Activated CD4-positive, alpha-beta T cell treated with anti-CD3 and anti-CD28 coated beads for 36 hours (primary cell): ENCODE measurements at regions of chr5 and their contacts with region 1.

Region 1: GRCh38 chr5:159262859-159263567 is at the start of gene UBLCP1:
- DNase-seq: peak; percentile 85
- ATAC-seq: peak; percentile 92
- H3K4me3 Mint-ChIP-seq: peak within 1 kb of the TSS; percentile 89
- H3K27ac Mint-ChIP-seq: peak within 1 kb of the TSS; percentile 100
- H3K4me1 Mint-ChIP-seq: peaks cover 49% of the 10 kb centered on the region
- H3K27me3 Mint-ChIP-seq: no peaks in the 10 kb centered on the region
- total RNA-seq, gene UBLCP1: 26.0 to 31.0 TPM

Region 2: GRCh38 chr5:159163027-159163700 is 99.8 kb before region 1 on chr5:
- CTCF ChIA-PET with region 1: no interaction called
- POLR2A ChIA-PET with region 1: no interaction called
- intact Hi-C with region 1: loop called in 1 of 2 experiments (anchors 1 kb)
- DNase-seq: peak; percentile 38
- ATAC-seq: peak; percentile 96
- H3K4me3 Mint-ChIP-seq: no peak overlapping the region
- H3K27ac Mint-ChIP-seq: peak overlapping the region; percentile 82
- H3K4me1 Mint-ChIP-seq: peaks cover 48% of the 10 kb centered on the region
- H3K27me3 Mint-ChIP-seq: no peaks in the 10 kb centered on the region

Region 3: DNA sequence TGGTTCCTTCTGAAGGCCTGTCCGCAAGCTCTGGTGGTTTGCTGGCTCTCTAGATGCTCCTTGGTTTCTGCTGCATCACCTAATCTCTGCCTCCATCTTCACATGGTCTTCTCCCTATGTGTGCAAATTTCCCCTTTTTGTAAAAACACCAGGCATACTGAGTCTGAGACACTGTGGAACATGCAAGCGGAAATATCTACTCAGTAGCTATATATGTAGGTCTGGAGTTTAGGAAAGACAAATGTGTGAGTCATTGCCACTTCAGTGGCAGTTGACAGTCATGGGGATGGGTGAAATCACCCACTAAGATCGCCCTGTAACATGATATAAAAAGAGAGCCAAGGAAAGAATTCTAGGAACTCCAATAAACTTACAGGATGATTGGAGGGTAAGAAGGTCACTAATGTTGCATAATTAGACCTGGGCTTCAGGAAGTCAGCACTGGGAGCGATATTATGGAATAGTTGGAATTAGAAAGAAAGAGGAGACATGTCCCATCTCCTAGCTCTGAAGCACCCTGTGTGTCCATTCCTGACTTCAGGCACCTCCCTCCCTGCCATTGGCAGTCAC is 22.6 kb before region 1 on chr5:
- CTCF ChIA-PET with region 1: interaction called, 5 read pairs
- POLR2A ChIA-PET with region 1: no interaction called
- intact Hi-C with region 1: loop called in 1 of 2 experiments (anchors 2 kb)
- DNase-seq: peak; percentile 25
- ATAC-seq: peak; percentile 84
- H3K4me3 Mint-ChIP-seq: no peak overlapping the region
- H3K27ac Mint-ChIP-seq: peak overlapping the region; percentile 62
- H3K4me1 Mint-ChIP-seq: peaks cover 45% of the 10 kb centered on the region
- H3K27me3 Mint-ChIP-seq: no peaks in the 10 kb centered on the region

Region 4: GRCh38 chr5:160119142-160119904 is 856.3 kb after region 1 on chr5 and contains the start of gene PWWP2A:
- CTCF ChIA-PET with region 1: no interaction called
- POLR2A ChIA-PET with region 1: no interaction called
- intact Hi-C with region 1: loop called in 1 of 2 experiments (anchors 10 kb)
- DNase-seq: peak; percentile 98
- ATAC-seq: peak; percentile 96
- H3K4me3 Mint-ChIP-seq: peak within 1 kb of the TSS; percentile 90
- H3K27ac Mint-ChIP-seq: peak within 1 kb of the TSS; percentile 94
- H3K4me1 Mint-ChIP-seq: peaks cover 16% of the 10 kb centered on the region
- H3K27me3 Mint-ChIP-seq: peaks cover 3% of the 10 kb centered on the region
- total RNA-seq, gene PWWP2A: 14.7 to 24.3 TPM